ENCODE measurements at regions of chr10 and their contacts with region 1.

Region 1: DNA sequence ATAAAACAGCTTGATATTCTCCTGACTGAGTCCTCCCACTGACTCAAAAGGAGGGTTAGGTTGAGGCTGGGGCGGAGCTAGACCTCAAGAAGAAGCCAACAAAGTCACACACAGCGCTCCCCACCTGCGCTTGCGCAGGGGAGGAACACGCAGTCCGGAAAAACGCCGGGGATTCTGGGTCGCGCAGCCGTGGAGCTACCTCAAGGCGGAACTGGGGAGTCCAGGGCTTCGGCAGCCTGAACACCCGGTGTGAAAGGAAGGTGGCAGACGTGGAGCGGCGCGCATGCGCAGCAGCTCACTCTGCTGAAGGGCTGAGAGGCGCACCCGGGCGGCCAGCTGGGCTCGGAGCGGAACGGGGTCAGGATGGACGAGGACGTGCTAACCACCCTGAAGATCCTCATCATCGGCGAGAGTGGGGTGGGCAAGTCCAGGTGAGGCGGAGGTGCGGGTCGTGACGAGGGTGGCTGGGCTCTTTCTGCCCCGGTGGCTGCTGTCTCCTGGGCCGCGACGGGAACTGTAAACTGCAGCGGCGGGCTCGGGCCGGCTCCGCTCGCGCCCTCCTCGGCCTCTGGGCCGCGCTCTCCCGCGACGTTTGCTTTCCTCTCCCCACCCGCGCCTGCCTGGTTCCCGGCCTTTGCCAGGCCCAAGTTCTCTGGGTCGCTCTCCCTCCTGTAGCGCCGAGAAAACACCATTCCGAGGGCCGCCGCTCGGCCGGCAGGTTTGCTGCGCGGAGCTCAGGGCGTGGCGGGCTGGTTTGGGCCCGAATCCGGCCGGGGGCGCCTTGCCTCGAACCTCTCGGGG is at the start of gene RAB18:
- DNase-seq: peak; percentile 95 to 100 (median 98)
- ATAC-seq: peak; percentile 95
- H3K4me3 ChIP-seq: peak within 1 kb of the TSS; percentile 74
- H3K4me3 Mint-ChIP-seq: peak within 1 kb of the TSS; percentile 99
- H3K27ac ChIP-seq: peak within 1 kb of the TSS; percentile 68 to 76
- H3K27ac Mint-ChIP-seq: peak within 1 kb of the TSS; percentile 97
- H3K4me1 ChIP-seq: peaks cover 31% of the 10 kb centered on the region
- H3K4me1 Mint-ChIP-seq: peaks cover 60% of the 10 kb centered on the region
- H3K27me3 ChIP-seq: no peaks in the 10 kb centered on the region
- H3K27me3 Mint-ChIP-seq: no peaks in the 10 kb centered on the region
- CTCF ChIP-seq: no peak
- total RNA-seq, gene RAB18: 120 to 130 TPM

Region 2: DNA sequence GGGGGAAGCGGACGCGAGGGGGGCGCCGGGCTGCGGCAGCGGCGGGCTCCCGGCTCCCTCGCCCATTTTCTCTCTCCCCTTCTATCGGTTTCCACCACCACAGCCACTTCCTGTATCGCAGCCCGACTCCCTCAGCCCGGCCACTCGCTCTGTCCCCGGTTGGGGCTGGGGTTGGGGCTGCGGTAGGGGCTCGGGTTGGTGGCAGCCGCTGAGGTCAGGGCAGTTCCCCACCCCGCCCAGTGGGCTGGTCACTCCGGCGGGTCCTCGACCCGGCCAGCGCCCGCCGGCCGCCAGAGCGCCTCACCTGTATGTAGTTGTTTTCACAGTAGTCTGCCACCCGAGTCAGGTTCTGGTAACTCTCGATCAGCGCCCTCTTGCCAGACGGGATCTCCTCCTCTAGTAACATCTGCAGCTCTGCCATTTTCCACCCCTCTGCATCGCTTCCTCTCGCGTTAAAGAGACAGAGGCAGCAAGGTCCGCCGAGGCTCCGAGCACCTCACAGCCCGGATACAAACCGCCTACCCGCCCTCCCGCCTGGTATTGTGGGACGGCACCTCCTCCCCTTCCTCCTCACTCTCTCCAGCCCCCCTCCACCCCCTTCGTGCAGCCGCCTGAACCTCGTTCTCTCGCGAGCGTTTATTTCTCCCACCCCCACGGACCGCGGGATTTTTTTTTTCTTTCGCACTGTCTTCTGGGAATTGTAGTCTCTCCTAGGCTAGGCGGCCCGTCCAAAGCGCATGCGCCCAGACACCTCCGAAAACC is 643.6 kb before region 1 on chr10 and contains the start of gene ABI1:
- CTCF ChIA-PET with region 1: no interaction called
- POLR2A ChIA-PET with region 1: interaction called, 6 read pairs
- intact Hi-C with region 1: loop called in 1 of 2 experiments (anchors 5 kb)
- DNase-seq: peak; percentile 96 to 99 (median 98)
- ATAC-seq: peak; percentile 90
- H3K4me3 ChIP-seq: peak within 1 kb of the TSS; percentile 91
- H3K4me3 Mint-ChIP-seq: peak within 1 kb of the TSS; percentile 95
- H3K27ac ChIP-seq: peak within 1 kb of the TSS; percentile 88 to 97
- H3K27ac Mint-ChIP-seq: peak within 1 kb of the TSS; percentile 87
- H3K4me1 ChIP-seq: peaks cover 22% of the 10 kb centered on the region
- H3K4me1 Mint-ChIP-seq: peaks cover 33% of the 10 kb centered on the region
- H3K27me3 ChIP-seq: no peaks in the 10 kb centered on the region
- H3K27me3 Mint-ChIP-seq: peaks cover 7% of the 10 kb centered on the region
- CTCF ChIP-seq: no peak
- total RNA-seq, gene ABI1: 83.2 to 83.6 TPM

Region 3: GRCh38 chr10:27241652-27242472 is 262.3 kb before region 1 on chr10:
- CTCF ChIA-PET with region 1: interaction called, 5 read pairs
- POLR2A ChIA-PET with region 1: interaction called, 48 read pairs
- intact Hi-C with region 1: loop called in 1 of 2 experiments (anchors 10 kb)
- DNase-seq: peak; percentile 70 to 95 (median 84)
- ATAC-seq: peak; percentile 61
- H3K4me3 ChIP-seq: peak overlapping the region; percentile 92
- H3K4me3 Mint-ChIP-seq: peak overlapping the region; percentile 88
- H3K27ac ChIP-seq: peak overlapping the region; percentile 85 to 97
- H3K27ac Mint-ChIP-seq: peak overlapping the region; percentile 94
- H3K4me1 ChIP-seq: peaks cover 35% of the 10 kb centered on the region
- H3K4me1 Mint-ChIP-seq: peaks cover 50% of the 10 kb centered on the region
- H3K27me3 ChIP-seq: no peaks in the 10 kb centered on the region
- H3K27me3 Mint-ChIP-seq: no peaks in the 10 kb centered on the region
- CTCF ChIP-seq: peak; percentile 49

Region 4: GRCh38 chr10:27446091-27446918 is 57.9 kb before region 1 on chr10:
- CTCF ChIA-PET with region 1: interaction called, 3 read pairs
- POLR2A ChIA-PET with region 1: interaction called, 10 read pairs
- intact Hi-C with region 1: loop called (anchors 5 to 10 kb)
- DNase-seq: peak in 3 of 14 experiments; percentile 53 to 57 (median 55)
- ATAC-seq: peak; percentile 52
- H3K4me3 ChIP-seq: no peak overlapping the region
- H3K4me3 Mint-ChIP-seq: no peak overlapping the region
- H3K27ac ChIP-seq: no peak overlapping the region
- H3K27ac Mint-ChIP-seq: no peak overlapping the region
- H3K4me1 ChIP-seq: peaks cover 3% of the 10 kb centered on the region
- H3K4me1 Mint-ChIP-seq: peaks cover 17% of the 10 kb centered on the region
- H3K27me3 ChIP-seq: no peaks in the 10 kb centered on the region
- H3K27me3 Mint-ChIP-seq: no peaks in the 10 kb centered on the region
- CTCF ChIP-seq: peak; percentile 67

Region 5: GRCh38 chr10:27529010-27529783 is 25.0 kb after region 1 on chr10:
- CTCF ChIA-PET with region 1: no interaction called
- POLR2A ChIA-PET with region 1: interaction called, 13 read pairs
- intact Hi-C with region 1: no loop called
- DNase-seq: no peak
- ATAC-seq: no peak
- H3K4me3 ChIP-seq: no peak overlapping the region
- H3K4me3 Mint-ChIP-seq: no peak overlapping the region
- H3K27ac ChIP-seq: no peak overlapping the region
- H3K27ac Mint-ChIP-seq: peak overlapping the region; percentile 13
- H3K4me1 ChIP-seq: peaks cover under 1% of the 10 kb centered on the region
- H3K4me1 Mint-ChIP-seq: peaks cover 62% of the 10 kb centered on the region
- H3K27me3 ChIP-seq: no peaks in the 10 kb centered on the region
- H3K27me3 Mint-ChIP-seq: no peaks in the 10 kb centered on the region
- CTCF ChIP-seq: no peak

Region 6: DNA sequence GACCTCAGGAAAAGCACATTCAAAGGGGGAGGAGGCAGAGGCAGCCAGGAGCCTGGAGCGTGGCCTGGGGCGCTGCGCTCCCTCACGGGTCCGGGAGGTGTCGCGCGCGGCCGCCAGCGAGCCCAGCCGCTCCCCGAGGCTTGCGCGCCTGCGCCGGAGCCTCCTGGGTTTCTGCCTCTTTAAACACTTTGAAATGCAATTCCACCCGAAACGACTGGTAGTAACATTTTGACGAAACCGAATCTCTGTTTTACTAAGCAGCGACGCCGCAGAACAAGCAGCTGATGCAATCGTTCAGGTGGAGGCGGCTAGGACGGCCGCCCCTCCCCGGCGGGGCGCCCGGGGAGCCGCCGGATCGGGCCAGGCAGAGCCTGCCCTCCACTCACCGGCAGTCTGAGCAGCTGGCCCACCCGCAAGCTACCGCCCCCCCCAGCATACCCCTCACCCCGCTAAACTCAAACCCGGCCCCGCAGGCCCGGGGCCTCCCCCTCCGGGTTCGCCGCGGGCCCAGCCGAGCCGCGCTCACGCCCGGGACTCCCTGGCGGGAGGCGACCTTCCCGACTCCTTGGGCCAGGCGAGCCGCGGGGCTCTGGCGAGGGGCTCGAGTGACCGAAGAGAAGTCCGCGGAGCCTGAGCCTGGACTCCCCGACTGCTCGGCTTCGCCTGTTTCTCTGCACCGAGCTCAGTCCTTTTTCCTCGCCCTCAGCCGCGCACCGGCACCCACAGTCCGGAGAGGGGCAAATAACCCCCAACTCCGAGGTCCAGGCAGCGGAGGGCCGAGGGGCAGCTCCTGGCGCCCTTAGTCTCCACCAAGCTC is 238.2 kb after region 1 on chr10:
- CTCF ChIA-PET with region 1: no interaction called
- POLR2A ChIA-PET with region 1: no interaction called
- intact Hi-C with region 1: loop called in 1 of 2 experiments (anchors 10 kb)
- DNase-seq: peak; percentile 58 to 90 (median 70)
- ATAC-seq: peak; percentile 89
- H3K4me3 ChIP-seq: peak overlapping the region; percentile 54
- H3K4me3 Mint-ChIP-seq: peak overlapping the region; percentile 91
- H3K27ac ChIP-seq: no peak overlapping the region
- H3K27ac Mint-ChIP-seq: no peak overlapping the region
- H3K4me1 ChIP-seq: peaks cover 59% of the 10 kb centered on the region
- H3K4me1 Mint-ChIP-seq: peaks cover 47% of the 10 kb centered on the region
- H3K27me3 ChIP-seq: peaks cover 55 to 72% of the 10 kb centered on the region in 2 experiments
- H3K27me3 Mint-ChIP-seq: peaks cover 81% of the 10 kb centered on the region
- CTCF ChIP-seq: peak; percentile 74

Region 7: DNA sequence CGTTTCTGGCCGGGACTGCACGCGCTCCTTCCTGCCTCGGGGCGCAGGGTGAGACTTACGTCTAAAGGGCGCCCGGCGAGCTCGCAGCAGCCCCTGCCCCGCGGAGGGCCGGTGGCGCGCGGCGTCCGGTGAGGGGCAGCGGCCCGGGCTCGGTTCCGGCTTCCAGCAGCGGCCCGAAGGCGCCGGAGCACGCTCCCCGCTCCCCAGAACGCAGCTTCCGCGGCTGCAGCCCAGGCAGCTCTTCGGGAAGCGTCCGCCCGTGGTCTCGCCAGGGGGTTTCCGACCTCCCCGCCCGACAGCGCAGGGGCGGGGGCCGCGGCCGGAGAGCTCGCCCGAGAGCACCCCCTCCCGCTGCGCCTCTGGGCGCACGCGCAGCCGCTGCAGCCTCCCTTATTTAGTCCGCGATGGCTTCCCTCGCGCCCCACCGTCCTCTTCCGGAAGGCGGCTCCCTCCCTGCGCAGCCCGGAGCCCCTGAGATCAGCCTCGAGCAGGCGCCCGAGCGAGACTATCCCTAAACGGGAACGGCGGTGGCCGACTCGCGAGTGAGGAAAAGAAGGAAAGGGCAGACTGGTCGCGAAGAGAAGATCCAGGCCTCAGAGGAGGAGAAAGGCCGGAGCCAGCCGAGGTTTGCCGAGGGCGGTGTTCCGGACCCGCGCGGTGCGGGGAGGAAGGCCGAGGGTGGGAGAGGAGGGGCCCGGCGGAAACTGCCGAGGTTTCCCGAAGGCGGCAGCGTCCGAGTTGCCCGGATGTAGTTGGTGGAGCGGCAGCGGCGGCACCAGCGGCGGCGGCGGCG is 1028.4 kb after region 1 on chr10 and contains the start of gene WAC:
- CTCF ChIA-PET with region 1: no interaction called
- POLR2A ChIA-PET with region 1: interaction called, 13 read pairs
- intact Hi-C with region 1: loop called in 1 of 2 experiments (anchors 2 kb)
- DNase-seq: peak; percentile 93 to 98 (median 97)
- ATAC-seq: peak; percentile 81
- H3K4me3 ChIP-seq: peak within 1 kb of the TSS; percentile 98
- H3K4me3 Mint-ChIP-seq: peak within 1 kb of the TSS; percentile 100
- H3K27ac ChIP-seq: peak within 1 kb of the TSS; percentile 99
- H3K27ac Mint-ChIP-seq: peak within 1 kb of the TSS; percentile 98
- H3K4me1 ChIP-seq: peaks cover 22% of the 10 kb centered on the region
- H3K4me1 Mint-ChIP-seq: peaks cover 73% of the 10 kb centered on the region
- H3K27me3 ChIP-seq: no peaks in the 10 kb centered on the region
- H3K27me3 Mint-ChIP-seq: no peaks in the 10 kb centered on the region
- CTCF ChIP-seq: peak; percentile 30
- total RNA-seq, gene WAC: 169 to 177 TPM

Region 8: GRCh38 chr10:28644647-28645046 is 1140.4 kb after region 1 on chr10:
- CTCF ChIA-PET with region 1: no interaction called
- POLR2A ChIA-PET with region 1: no interaction called
- intact Hi-C with region 1: no loop called
- DNase-seq: no peak
- ATAC-seq: no peak
- H3K4me3 ChIP-seq: no peak overlapping the region
- H3K4me3 Mint-ChIP-seq: no peak overlapping the region
- H3K27ac ChIP-seq: no peak overlapping the region
- H3K27ac Mint-ChIP-seq: no peak overlapping the region
- H3K4me1 ChIP-seq: no peaks in the 10 kb centered on the region
- H3K4me1 Mint-ChIP-seq: no peaks in the 10 kb centered on the region
- H3K27me3 ChIP-seq: no peaks in the 10 kb centered on the region
- H3K27me3 Mint-ChIP-seq: peaks cover 12% of the 10 kb centered on the region
- CTCF ChIP-seq: no peak